Activated CD4-positive, alpha-beta memory T cell treated with anti-CD3 and anti-CD28 coated beads, Interleukin-2, amount 10 ng/mL, durations not matched to agents 7 days and 5 days (primary cell): ENCODE measurements at regions of chr19 and their contacts with region 1.

Region 1: DNA sequence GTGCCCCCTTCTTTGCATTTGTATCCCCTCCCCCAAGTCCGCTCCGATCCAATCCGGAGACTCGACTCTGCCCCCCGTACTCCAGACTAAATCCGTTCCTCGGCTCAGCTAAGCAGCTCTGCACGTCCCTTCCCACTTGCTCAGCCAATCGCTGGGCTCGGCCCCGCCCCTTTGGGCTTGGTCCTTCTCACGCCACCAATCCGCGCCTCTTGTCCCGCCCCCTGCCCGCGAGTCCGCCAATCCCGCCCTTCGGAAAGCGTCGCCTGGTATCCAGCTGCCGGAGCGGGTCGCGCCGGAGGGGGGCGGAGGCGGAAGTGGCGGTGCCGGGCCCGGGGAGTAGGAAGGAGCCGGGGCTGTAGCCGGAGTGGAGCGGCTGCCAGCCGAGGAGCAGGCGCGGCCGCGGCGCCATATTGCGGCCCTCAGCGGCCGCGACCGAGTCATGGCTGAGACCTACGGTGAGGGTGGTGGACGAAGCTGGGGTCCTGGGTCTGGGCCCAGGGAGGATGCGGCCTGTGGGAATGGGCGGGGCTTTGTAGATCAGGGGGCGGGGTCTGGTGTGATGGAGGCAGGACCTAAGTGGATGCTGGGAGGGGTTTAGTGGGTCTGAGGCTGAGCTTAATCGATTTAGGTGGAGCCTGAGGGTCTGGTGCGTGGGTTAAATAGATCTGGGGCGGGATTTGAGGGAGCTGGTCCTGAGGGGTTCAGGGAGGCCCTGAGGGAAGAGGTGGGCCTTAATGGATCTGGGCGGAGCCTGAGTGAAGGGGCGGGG is at the start of gene RAB4B:
- DNase-seq: peak; percentile 100
- H3K4me3 Mint-ChIP-seq: peak within 1 kb of the TSS; percentile 95
- H3K27ac Mint-ChIP-seq: peak within 1 kb of the TSS; percentile 99
- H3K4me1 Mint-ChIP-seq: peaks cover 36% of the 10 kb centered on the region
- H3K27me3 Mint-ChIP-seq: peaks cover 2% of the 10 kb centered on the region
- total RNA-seq, gene RAB4B: 65.7 to 68.3 TPM

Region 2: GRCh38 chr19:40662921-40663694 is 115.0 kb before region 1 on chr19:
- CTCF ChIA-PET with region 1: interaction called, 10 read pairs
- POLR2A ChIA-PET with region 1: interaction called, 3 read pairs
- DNase-seq: peak; percentile 92
- H3K4me3 Mint-ChIP-seq: peak overlapping the region; percentile 77
- H3K27ac Mint-ChIP-seq: peak overlapping the region; percentile 66
- H3K4me1 Mint-ChIP-seq: peaks cover 31% of the 10 kb centered on the region
- H3K27me3 Mint-ChIP-seq: peaks cover 5% of the 10 kb centered on the region

Region 3: GRCh38 chr19:40716655-40717324 is 61.3 kb before region 1 on chr19 and contains the starts of genes COQ8B and ITPKC:
- CTCF ChIA-PET with region 1: interaction called, 4 read pairs
- POLR2A ChIA-PET with region 1: interaction called, 21 read pairs
- DNase-seq: peak; percentile 100
- H3K4me3 Mint-ChIP-seq: peak within 1 kb of the TSS; percentile 90
- H3K27ac Mint-ChIP-seq: peak within 1 kb of the TSS; percentile 87
- H3K4me1 Mint-ChIP-seq: peaks cover 70% of the 10 kb centered on the region
- H3K27me3 Mint-ChIP-seq: no peaks in the 10 kb centered on the region
- total RNA-seq, gene COQ8B: 32.5 to 37.7 TPM
- total RNA-seq, gene ITPKC: 6.6 to 6.8 TPM

Region 4: DNA sequence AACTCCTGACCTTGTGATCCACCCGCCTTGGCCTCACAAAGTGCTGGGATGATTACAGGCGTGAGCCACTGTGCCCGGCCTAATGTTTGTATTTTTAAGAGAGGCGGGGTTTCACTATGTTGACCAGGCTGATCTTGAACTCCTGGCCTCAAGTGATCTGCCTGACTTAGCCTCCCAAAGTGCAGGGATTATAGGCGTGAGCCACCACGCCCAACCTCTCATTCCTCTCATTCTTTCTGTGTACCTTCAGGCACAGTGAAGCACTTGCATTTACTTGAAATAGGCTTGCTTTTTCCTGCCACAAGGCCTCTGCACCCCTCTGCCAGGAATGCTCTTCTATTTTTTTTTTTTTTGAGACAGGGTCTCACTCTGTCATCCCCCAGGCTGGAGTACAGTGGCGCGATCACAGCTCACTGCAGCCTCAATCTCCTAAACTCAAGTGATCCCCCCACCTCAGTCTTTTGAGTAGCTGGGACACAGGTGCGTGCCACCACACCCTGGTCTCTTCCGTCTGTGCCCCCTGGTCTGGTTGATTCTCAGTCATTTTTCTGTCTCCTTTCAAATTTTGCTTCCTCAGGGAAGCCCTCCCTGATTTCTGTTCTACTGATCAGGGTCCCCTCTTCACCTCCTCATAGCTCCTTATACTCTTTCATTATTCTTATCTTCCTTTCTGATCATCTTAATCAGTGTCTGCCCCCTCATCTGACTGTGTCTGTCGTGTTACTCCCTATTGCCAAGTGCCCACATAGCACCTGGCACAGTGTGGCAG is 42.9 kb before region 1 on chr19:
- CTCF ChIA-PET with region 1: no interaction called
- POLR2A ChIA-PET with region 1: no interaction called
- DNase-seq: no peak
- H3K4me3 Mint-ChIP-seq: no peak overlapping the region
- H3K27ac Mint-ChIP-seq: no peak overlapping the region
- H3K4me1 Mint-ChIP-seq: peaks cover 4% of the 10 kb centered on the region
- H3K27me3 Mint-ChIP-seq: no peaks in the 10 kb centered on the region

Region 5: GRCh38 chr19:40762754-40763470 is 15.2 kb before region 1 on chr19:
- CTCF ChIA-PET with region 1: no interaction called
- POLR2A ChIA-PET with region 1: interaction called, 244 read pairs
- DNase-seq: no peak
- H3K4me3 Mint-ChIP-seq: no peak overlapping the region
- H3K27ac Mint-ChIP-seq: peak overlapping the region; percentile 34
- H3K4me1 Mint-ChIP-seq: peaks cover 44% of the 10 kb centered on the region
- H3K27me3 Mint-ChIP-seq: no peaks in the 10 kb centered on the region

Region 6: DNA sequence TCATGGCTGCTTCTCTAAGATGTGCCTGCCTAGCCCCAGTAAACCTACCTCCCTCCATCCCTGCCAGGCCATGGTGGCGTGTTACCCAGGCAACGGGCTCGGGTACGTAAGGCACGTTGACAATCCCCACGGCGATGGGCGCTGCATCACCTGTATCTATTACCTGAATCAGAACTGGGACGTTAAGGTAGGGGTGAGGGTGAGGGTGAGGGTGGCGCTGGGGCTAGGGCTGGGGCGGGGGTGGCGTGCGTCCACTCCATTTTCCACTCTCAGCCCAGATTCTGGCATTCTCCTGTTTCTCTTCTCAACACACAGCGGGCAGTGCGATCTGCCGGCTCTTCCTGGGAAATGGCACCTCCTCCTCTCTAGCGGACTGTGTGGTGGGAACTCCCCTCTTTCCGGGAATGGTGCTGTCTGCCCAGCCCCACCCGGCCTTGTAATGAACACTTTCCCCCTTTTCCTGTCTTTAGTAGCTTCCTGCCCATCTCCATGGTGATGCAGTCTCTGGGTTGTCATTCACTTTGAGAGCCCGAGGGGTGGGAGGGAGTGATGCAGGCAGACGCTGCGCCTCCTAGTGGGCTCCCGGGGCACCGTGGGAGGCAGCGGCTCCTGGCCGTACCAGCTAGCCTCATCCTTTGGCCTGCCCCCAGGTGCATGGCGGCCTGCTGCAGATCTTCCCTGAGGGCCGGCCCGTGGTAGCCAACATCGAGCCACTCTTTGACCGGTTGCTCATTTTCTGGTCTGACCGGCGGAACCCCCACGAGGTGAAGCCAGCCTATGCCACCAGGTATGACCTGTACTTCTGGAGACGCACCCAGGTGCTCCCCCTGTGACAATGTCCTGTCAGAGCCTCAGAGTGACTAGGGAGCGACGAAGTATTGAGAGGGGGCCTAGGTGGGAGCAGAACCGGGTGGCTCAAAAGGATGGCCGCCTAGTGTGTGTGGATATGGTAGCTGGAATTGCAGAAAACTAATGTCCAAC is 28.7 kb after region 1 on chr19:
- CTCF ChIA-PET with region 1: interaction called, 50 read pairs
- POLR2A ChIA-PET with region 1: interaction called, 161 read pairs
- DNase-seq: peak; percentile 84
- H3K4me3 Mint-ChIP-seq: peak overlapping the region; percentile 64
- H3K27ac Mint-ChIP-seq: peak overlapping the region; percentile 97
- H3K4me1 Mint-ChIP-seq: peaks cover 91% of the 10 kb centered on the region
- H3K27me3 Mint-ChIP-seq: peaks cover 5% of the 10 kb centered on the region